Activated T-helper 1 cell treated with anti-CD3 and anti-CD28 coated beads, Interleukin-12 subunit alpha, Interleukin-12 subunit beta, Interleukin-2, Interleukin-4 antibody, amounts not matched to agents 30 ng/mL and 10 ng/mL and 1 ng/mL, durations not matched to agents 14 hours and 24 hours and 36 hours (primary cell): ENCODE measurements at regions of chr1 and their contacts with region 1.

Region 1: DNA sequence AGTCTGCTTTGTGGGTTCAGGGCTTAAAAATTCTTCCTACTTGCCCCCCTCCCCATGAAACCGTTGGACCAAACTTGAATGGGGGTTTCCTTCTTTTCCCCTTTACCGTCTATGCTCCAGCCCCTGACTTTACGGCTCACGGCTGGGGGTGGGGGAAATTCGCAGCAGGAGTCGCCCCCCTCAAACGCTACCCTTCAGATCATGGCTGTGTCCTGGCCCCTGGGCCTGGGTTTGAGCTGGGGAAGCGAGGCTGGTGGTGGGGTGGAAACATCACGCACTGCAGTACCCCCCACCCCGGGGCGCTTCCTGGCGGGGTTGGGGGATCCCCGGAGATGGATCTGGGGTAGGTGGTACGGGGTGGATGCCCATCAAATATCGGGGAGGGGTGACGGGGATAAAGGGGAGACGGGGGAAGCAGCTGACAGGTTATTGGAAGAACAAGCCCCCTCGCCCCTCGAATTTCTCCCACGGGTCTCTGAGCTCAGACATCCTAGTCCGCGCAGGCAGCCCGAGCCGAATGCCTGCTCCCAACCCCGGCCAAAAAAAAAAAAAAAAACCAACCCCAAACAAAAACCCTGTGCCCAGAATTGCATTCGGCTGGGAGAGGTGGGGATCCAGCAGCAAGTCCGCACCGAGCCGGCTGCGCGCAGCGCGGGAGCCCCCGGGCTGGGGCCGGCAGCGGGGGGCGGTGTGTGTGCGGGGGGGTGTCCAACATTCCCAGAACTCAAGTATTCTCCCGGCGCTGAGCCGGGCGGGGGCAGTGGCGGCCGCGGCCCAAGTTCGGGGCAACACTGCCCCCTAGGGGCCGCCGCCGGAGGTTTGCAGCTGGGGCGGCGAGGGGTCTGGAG is 59.0 kb upstream of the ACOT11 start:
- DNase-seq: peak; percentile 71
- H3K4me3 Mint-ChIP-seq: peak overlapping the region; percentile 86
- H3K27ac Mint-ChIP-seq: peak overlapping the region; percentile 82
- H3K4me1 Mint-ChIP-seq: peaks cover 36% of the 10 kb centered on the region
- H3K27me3 Mint-ChIP-seq: peaks cover 35% of the 10 kb centered on the region

Region 2: DNA sequence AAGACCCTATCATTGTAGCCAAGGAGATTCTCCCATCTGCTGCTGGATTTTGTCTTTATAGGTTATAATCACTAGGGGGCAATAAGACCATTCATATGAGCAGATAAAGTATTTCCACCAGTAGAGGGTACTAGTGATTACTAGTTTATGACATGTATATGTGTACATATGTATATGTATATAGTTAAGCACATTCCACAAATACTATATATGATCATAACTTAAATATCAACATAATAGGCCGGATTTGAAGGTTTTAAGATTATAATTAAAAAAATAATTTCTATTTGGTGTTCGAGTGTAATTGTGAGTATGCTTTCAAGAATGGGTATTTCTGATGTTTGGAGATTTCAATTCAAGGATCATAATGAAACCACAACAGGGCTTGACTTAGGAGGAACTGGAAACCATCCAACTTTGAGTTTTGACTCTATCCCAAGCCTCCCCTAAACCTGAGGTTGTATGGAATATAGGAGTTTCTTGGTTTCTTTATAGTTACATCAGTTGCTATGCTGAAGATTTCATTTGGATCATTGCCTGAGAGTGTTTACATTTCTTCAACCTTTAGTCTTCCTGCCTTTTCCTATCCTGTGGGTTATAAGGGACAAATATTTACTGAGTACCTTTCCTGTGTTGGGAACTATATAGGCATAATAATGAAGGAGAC is 418.7 kb before region 1 on chr1:
- intact Hi-C with region 1: loop called (anchors 1 kb)
- DNase-seq: no peak
- H3K4me3 Mint-ChIP-seq: no peak overlapping the region
- H3K27ac Mint-ChIP-seq: no peak overlapping the region
- H3K4me1 Mint-ChIP-seq: no peaks in the 10 kb centered on the region
- H3K27me3 Mint-ChIP-seq: no peaks in the 10 kb centered on the region

Region 3: GRCh38 chr1:54199765-54200518 is 289.1 kb before region 1 on chr1 and contains the starts of genes CYB5RL and MRPL37:
- intact Hi-C with region 1: loop called (anchors 1 kb)
- DNase-seq: peak; percentile 89
- H3K4me3 Mint-ChIP-seq: peak within 1 kb of the TSS; percentile 90
- H3K27ac Mint-ChIP-seq: peak within 1 kb of the TSS; percentile 60
- H3K4me1 Mint-ChIP-seq: peaks cover 40% of the 10 kb centered on the region
- H3K27me3 Mint-ChIP-seq: no peaks in the 10 kb centered on the region
- total RNA-seq, gene CYB5RL: 8.3 and 11.3 TPM in 2 replicates
- total RNA-seq, gene MRPL37: 145 and 150 TPM in 2 replicates

Region 4: GRCh38 chr1:54287176-54287650 is 201.8 kb before region 1 on chr1:
- intact Hi-C with region 1: loop called (anchors 2 kb)
- DNase-seq: peak; percentile 79
- H3K4me3 Mint-ChIP-seq: peak overlapping the region; percentile 81
- H3K27ac Mint-ChIP-seq: peak overlapping the region; percentile 98
- H3K4me1 Mint-ChIP-seq: peaks cover 89% of the 10 kb centered on the region
- H3K27me3 Mint-ChIP-seq: no peaks in the 10 kb centered on the region

Region 5: DNA sequence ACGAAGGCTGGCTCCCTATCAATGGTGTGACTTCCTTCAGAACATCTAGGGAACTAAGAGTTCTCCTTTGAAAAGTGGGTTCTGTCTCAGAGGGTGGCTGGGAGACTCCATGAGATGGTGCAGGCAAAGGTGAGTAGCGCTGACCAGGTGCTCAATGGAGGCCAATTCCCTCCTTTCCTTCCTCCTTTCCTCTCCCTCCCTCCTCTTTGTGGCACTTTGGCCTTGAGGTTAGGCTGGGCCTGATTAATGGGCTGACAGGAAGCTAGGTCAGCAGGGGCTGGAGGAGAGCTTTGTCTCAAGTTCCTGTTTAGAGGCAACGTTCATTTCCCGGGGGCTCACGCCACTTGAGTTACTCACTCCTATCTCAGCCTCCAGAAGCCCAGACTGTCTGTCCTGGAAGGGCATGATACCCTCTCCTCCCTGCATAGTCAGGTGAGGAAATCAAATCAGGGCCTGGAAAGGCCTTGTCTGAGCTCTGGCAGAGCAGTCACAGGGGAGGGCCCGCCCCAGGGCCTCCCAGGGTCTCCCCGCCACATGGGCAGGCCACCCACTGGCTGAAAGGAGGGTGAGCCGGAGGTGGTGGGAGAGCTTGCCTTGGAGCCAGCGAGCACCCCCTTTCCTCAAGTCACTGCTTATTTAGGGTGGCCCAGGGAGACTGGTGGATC is 24.4 kb before region 1 on chr1:
- intact Hi-C with region 1: loop called (anchors 1 kb)
- DNase-seq: no peak
- H3K4me3 Mint-ChIP-seq: no peak overlapping the region
- H3K27ac Mint-ChIP-seq: no peak overlapping the region
- H3K4me1 Mint-ChIP-seq: peaks cover 39% of the 10 kb centered on the region
- H3K27me3 Mint-ChIP-seq: no peaks in the 10 kb centered on the region